ENCODE measurements at regions of chr13 and their contacts with region 1.

Region 1: GRCh38 chr13:67416047-67416925 is 186.2 kb upstream of the PCDH9 start:
- DNase-seq: peak; percentile 96

Region 2: DNA sequence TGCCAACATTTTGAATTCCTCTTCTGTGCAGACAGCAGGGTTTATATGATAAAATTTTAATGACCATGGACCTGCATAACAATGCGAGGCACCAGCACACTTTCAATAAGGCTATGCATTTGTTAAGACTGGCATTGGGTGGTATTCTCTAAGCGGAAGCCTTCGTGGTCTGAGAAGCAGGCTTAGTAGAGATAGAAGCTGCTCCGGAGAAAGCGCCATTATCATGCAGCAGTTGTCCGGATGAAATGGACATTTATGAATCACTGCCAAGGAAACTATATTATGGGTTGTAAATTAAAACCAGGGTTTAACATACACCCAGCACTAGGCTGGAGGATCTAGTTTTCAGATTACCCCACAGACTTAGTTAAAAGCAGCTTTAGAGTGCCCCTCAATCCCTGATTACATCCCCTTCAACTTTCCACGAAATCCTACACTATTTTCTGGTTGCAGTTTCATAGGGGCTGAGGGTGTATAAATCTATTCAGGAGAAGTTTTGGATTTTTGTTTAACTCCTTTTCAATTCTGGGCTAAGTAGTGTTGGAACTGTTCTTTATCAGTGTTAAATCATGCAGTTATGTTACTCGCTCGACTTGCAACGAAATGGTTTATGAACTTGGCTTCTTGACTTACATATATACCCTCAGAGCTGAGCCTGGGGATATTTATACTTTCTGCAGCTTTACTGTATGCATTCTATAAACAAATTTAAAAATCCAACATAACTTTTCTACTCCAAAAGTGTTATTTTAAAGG is 379.4 kb before region 1 on chr13:
- CTCF ChIA-PET with region 1: no interaction called
- POLR2A ChIA-PET with region 1: no interaction called
- DNase-seq: peak; percentile 69

Region 3: DNA sequence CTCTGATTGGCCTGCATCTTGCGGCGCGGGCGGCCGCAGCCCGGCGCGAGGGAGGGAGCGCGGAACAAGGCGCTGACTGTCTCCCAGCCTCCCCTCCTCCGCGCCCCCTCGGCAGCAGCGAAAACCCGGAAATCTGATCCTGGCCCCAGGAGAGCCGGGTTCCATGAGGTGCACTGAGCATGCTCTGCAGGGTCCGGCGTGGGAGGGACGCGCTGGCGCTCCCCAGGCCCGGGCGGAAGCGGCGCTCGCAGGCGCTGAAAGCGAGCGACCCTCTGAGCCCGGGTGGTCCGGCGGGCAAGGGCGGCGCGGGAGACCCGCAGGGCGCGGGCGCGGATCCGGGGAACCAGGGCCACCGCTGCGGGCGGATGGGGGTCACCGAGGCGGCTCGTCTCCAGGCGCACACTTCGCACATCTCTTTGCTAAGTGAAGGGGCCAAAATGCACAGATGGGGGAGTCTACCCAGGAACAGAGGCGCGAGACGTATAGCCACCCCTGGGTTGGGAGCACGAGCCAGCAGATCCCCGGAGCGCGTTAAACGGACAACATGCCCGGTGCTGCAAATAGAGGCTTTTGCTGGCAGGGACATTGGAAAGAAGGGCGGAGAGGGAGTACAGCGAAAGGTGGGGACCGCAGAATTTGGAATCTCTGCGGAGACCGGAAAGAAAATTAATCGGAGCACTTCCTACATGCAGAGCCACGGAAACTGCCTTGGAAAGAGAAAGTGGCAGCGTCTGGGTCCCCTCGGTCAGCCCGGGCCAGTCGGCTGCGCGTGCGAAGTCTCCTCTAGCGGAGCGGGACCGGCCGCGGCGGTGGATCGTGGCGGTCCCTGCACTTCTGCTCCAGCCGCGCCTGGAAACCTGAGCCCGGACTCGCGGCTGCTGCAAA is 185.6 kb before region 1 on chr13:
- CTCF ChIA-PET with region 1: interaction called, 10 read pairs
- POLR2A ChIA-PET with region 1: no interaction called
- DNase-seq: peak; percentile 100

Region 4: GRCh38 chr13:67238277-67238859 is 177.9 kb before region 1 on chr13:
- CTCF ChIA-PET with region 1: interaction called, 14 read pairs
- POLR2A ChIA-PET with region 1: no interaction called
- DNase-seq: no peak

Measured in HEK293T (cell line).